K562 (cell line): ENCODE measurements at regions of chr20 and their contacts with region 1.

Region 1: DNA sequence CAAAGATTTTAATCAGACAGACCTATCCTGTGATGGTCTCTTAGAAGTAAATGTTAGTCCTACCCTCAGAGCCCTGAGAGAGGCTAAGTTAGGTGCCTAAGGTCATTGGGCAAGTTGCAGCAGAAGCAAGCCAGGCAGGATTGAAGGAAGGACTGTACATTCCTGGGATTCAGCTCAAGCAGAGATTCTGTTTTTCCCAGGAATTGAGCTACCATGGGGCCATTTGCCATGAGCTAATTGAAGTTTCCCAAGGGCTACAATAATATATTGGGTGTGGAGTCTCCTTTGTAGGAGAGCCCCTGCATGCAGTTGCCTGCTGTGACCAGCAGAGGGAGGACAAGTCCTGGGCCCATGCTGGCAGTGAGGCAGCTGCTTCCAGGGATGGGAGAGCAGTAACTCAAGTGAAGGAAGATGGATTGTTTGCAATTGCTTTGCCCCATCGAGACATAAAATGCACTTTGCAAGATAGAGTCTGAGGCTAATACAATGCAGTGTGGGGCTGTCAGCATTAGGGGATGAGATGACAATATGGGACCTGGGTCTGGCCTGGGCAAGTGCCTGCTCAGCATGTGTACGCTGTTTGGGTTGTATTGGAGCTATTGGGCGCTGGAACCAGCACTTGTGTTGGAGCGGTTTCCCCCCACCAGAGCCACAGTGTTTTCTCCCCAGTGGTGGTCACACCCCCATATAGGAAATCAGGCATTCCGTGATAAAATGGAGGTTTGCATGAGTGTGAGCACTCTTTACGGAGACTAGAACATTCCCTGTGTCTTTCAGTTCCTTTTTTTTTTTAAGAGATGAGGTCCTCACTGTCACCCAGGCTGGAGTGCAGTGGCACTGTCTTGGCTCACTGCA is 27.9 kb downstream of the DNMT3B start:
- DNase-seq: peak; percentile 76 to 83 (median 80)
- ATAC-seq: peak; percentile 97
- H3K4me3 ChIP-seq: no peak overlapping the region
- H3K27ac ChIP-seq: no peak overlapping the region
- H3K4me1 ChIP-seq: no peaks in the 10 kb centered on the region
- H3K27me3 ChIP-seq: no peaks in the 10 kb centered on the region
- CTCF ChIP-seq: peak; percentile 87 to 99 (median 95)
- EP300 ChIP-seq: no peak
- POLR2A ChIP-seq: no peak
- RAD21 ChIP-seq: peak; percentile 57 to 81

Region 2: DNA sequence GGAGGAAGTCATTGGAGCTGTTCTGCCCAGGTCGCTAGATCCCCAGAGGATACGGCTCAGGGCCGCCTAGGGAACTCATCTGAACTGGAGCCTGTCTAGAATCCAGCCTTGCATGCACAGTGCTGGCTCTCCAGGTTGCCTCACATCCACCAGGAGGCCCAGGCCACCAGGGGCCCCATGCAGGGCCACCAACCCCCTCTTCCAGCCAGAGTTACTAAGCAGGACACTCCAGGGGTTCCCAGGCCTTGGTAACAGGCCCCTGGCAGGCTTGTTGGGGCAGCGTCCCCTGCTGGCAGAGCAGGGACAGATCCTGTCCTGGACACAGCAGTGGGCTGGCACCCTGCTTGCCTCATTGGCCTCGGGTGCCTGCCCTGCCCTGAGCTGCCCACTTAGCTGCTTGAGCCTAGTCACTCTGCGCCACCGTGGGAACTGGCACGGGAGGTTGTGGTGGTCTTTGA is 103.9 kb after region 1 on chr20:
- CTCF ChIA-PET with region 1: no interaction called
- POLR2A ChIA-PET with region 1: no interaction called
- in situ Hi-C with region 1: no loop called
- intact Hi-C with region 1: loop called (anchors 1 kb)
- DNase-seq: peak; percentile 56 to 66 (median 62)
- ATAC-seq: peak; percentile 93
- H3K4me3 ChIP-seq: no peak overlapping the region
- H3K27ac ChIP-seq: no peak overlapping the region
- H3K4me1 ChIP-seq: peaks cover 0 to 7% of the 10 kb centered on the region in 2 experiments; a peak in 2 of 5 replicates
- H3K27me3 ChIP-seq: peaks cover 28 to 62% of the 10 kb centered on the region in 2 experiments
- CTCF ChIP-seq: peak; percentile 79 to 89 (median 82)
- EP300 ChIP-seq: no peak
- POLR2A ChIP-seq: no peak
- RAD21 ChIP-seq: peak; percentile 5 to 76; a peak in 2 of 4 replicates